Activated CD8-positive, alpha-beta T cell treated with anti-CD3 and anti-CD28 coated beads for 36 hours (primary cell): ENCODE measurements at regions of chr1 and their contacts with region 1.

Region 1: GRCh38 chr1:40519517-40519916 is 10.9 kb downstream of the EXO5 start:
- DNase-seq: no peak
- ATAC-seq: no peak
- H3K4me3 Mint-ChIP-seq: no peak overlapping the region
- H3K27ac Mint-ChIP-seq: no peak overlapping the region
- H3K4me1 Mint-ChIP-seq: no peaks in the 10 kb centered on the region
- H3K27me3 Mint-ChIP-seq: peaks cover 2% of the 10 kb centered on the region
- CTCF ChIP-seq: no peak

Region 2: GRCh38 chr1:40508375-40509341 is 10.9 kb before region 1 on chr1 and contains the start of gene EXO5:
- CTCF ChIA-PET with region 1: no interaction called
- POLR2A ChIA-PET with region 1: interaction called, 12 read pairs
- intact Hi-C with region 1: no loop called
- DNase-seq: peak; percentile 91
- ATAC-seq: peak; percentile 99
- H3K4me3 Mint-ChIP-seq: peak within 1 kb of the TSS; percentile 79
- H3K27ac Mint-ChIP-seq: peak within 1 kb of the TSS; percentile 90
- H3K4me1 Mint-ChIP-seq: peaks cover 15% of the 10 kb centered on the region
- H3K27me3 Mint-ChIP-seq: no peaks in the 10 kb centered on the region
- CTCF ChIP-seq: no peak
- total RNA-seq, gene EXO5: 8.7 to 10.2 TPM